ENCODE measurements at regions of chr6 and their contacts with region 1.

Region 1: DNA sequence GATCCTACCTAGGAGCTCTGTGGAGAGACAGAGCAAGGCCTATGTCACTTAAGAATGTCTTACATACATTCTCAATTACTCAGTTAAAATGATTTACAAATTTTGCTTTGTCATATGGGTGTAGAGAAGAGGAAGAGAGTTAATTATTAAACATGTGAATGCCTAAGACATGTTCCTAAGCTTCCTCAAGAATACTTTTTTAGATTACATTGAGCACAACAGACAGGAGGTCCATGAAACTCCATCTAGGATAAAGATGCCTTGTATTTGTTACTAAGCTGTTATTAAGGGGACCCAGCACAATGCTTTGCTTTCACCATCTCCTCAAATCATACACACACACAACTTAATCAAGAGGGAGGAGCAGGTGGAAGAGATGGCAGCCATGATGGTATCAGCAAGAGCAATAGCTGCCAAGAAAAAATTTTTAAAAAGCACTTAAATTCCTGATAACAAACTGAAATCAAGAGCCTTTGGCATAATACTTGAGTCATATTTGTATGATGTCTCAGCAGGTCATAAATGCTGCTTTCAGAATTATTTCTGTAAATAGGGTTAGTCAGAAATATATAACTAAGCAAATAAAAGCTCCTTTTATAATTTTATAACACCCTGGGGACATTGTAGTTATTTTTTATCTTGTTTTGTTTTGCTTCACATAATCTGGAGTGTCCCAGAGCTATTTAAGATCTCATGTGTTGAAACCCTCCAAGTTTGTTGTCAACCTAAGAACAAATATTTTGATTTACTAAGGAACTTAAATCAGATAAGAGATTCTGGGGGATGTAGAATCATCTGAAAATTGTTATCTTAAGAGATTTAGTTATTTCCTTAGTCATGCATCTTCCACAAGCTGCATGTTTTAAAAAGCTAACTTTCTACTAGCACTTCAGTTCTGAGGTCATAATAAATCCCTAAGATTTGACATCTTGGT is 70.0 kb upstream of the CD2AP start:
- DNase-seq: no peak
- H3K4me3 ChIP-seq: no peak overlapping the region
- H3K27ac ChIP-seq: no peak overlapping the region
- H3K4me1 ChIP-seq: no peaks in the 10 kb centered on the region
- H3K27me3 ChIP-seq: no peaks in the 10 kb centered on the region
- CTCF ChIP-seq: no peak
- POLR2A ChIP-seq: no peak

Region 2: GRCh38 chr6:47787620-47788497 is 380.2 kb after region 1 on chr6:
- intact Hi-C with region 1: loop called (anchors 10 kb)
- DNase-seq: no peak
- H3K4me3 ChIP-seq: peak overlapping the region in 1 of 2 donors; percentile 23
- H3K27ac ChIP-seq: no peak overlapping the region
- H3K4me1 ChIP-seq: no peaks in the 10 kb centered on the region
- H3K27me3 ChIP-seq: no peaks in the 10 kb centered on the region
- CTCF ChIP-seq: peak; percentile 70 to 77 (median 75)
- POLR2A ChIP-seq: no peak

Measured in vagina (tissue), 2 donors.